Left lung (tissue), 14 donors: ENCODE measurements at regions of chr5 and their contacts with region 1.

Region 1: GRCh38 chr5:55691265-55692105 is 20.6 kb downstream of the SLC38A9 start:
- DNase-seq: peak in 2 of 4 donors; percentile 49 to 61
- ATAC-seq: peak; percentile 87
- H3K4me3 ChIP-seq: no peak overlapping the region
- H3K27ac ChIP-seq: no peak overlapping the region
- H3K4me1 ChIP-seq: peaks cover 6 to 11% of the 10 kb centered on the region in 2 donors
- H3K27me3 ChIP-seq: no peaks in the 10 kb centered on the region
- CTCF ChIP-seq: peak; percentile 52 to 57

Region 2: GRCh38 chr5:55407059-55407684 is 284.3 kb before region 1 on chr5:
- intact Hi-C with region 1: loop called in 1 of 2 experiments (anchors 5 kb)
- DNase-seq: peak in 1 of 4 donors; percentile 58
- ATAC-seq: peak; percentile 80
- H3K4me3 ChIP-seq: no peak overlapping the region
- H3K27ac ChIP-seq: no peak overlapping the region
- H3K4me1 ChIP-seq: peaks cover 0 to 5% of the 10 kb centered on the region in 2 donors
- H3K27me3 ChIP-seq: no peaks in the 10 kb centered on the region
- CTCF ChIP-seq: peak; percentile 22 to 54

Region 3: DNA sequence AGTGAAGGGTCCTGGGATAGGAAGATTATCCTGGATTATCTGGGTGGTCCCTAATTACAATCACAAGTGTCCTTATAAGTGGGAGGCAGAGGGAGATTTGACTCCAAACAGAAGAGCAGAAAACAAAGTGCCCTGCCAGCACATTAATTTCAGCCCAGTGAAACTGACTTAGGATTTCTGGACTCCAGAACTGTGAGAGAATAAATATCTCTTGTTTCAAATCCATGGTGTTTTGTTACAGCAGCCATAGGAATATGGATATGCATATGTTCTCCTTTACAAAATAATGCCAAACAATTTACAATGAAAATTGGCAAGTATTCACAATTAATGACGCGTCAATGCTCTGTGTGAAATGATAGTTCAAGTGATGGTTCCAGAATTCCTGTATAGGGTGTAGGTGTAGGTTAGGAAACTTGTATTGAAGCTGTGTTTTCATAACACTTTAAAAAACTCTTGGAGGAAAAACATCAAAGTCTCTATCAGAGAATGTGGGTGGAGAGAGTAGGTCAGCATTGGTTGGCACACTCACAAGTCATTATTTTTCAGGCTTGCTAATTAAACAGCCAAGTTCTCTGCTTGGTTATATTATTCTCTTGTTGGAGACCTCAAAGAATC is 136.8 kb before region 1 on chr5:
- intact Hi-C with region 1: no loop called
- DNase-seq: no peak
- ATAC-seq: no peak
- H3K4me3 ChIP-seq: no peak overlapping the region
- H3K27ac ChIP-seq: no peak overlapping the region
- H3K4me1 ChIP-seq: no peaks in the 10 kb centered on the region
- H3K27me3 ChIP-seq: no peaks in the 10 kb centered on the region
- CTCF ChIP-seq: no peak